Common myeloid progenitor, CD34-positive (primary cell): ENCODE measurements at regions of chr2 and their contacts with region 1.

Region 1: GRCh38 chr2:68734688-68735525 is at the start of gene ARHGAP25:
- DNase-seq: peak; percentile 59 to 95 (median 89)
- H3K4me3 ChIP-seq: peak within 1 kb of the TSS in 6 of 7 experiments; percentile 71 to 90 (median 86)
- H3K27ac ChIP-seq: peak within 1 kb of the TSS; percentile 71 to 85
- H3K4me1 ChIP-seq: peaks cover 59 to 93% (median 77%) of the 10 kb centered on the region in 4 experiments
- H3K27me3 ChIP-seq: no peaks in the 10 kb centered on the region

Region 2: DNA sequence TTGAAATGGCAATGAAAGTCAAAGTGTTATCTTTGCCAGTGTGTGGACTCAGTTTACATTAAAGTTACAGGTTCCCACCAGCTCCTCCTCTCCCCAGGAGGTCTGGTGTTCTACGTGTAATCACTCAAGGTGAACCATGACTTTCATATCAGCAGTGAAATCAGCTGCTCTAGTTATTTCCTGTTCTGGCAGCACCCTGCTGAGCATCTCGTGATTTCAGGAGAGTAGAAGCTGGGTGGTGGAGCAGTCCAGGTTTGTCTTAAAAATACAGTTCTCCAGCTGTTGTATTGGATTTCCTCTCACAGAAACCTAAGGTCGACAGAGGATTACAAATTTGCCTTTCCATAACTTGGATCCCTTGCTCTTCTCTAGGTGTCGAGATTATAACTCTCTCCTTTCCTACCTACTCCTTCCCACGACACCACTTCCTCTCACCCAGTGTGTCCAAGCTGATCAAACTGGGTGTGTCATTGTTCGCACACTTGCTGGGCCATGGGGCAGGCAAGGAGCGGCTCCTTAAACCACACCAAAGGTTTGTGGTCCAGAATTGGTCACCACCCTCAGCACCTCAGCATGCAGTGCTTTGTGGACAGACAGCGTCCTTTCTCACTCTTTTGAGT is 13.3 kb before region 1 on chr2:
- CTCF ChIA-PET with region 1: interaction called, 106 read pairs
- POLR2A ChIA-PET with region 1: interaction called, 3 read pairs
- DNase-seq: peak in 2 of 3 donors; percentile 48 to 69
- H3K4me3 ChIP-seq: peak overlapping the region in 1 of 7 experiments; percentile 21
- H3K27ac ChIP-seq: peak overlapping the region in 1 of 2 experiments; percentile 35
- H3K4me1 ChIP-seq: peaks cover 19 to 81% (median 66%) of the 10 kb centered on the region in 4 experiments
- H3K27me3 ChIP-seq: no peaks in the 10 kb centered on the region